Activated T-helper 2 cell treated with anti-CD3 and anti-CD28 coated beads, Interferon-gamma antibody, Interleukin-2, Interleukin-4, amounts not matched to agents 10 μg/mL and 5 μg/mL and 100 μg/mL, durations not matched to agents 14 hours and 24 hours and 36 hours (primary cell): ENCODE measurements at regions of chr1 and their contacts with region 1.

Region 1: GRCh38 chr1:219189021-219189824 is 15.5 kb downstream of the LYPLAL1 start:
- DNase-seq: no peak
- H3K4me3 Mint-ChIP-seq: no peak overlapping the region
- H3K27ac Mint-ChIP-seq: no peak overlapping the region
- H3K4me1 Mint-ChIP-seq: peaks cover 21% of the 10 kb centered on the region
- H3K27me3 Mint-ChIP-seq: no peaks in the 10 kb centered on the region

Region 2: DNA sequence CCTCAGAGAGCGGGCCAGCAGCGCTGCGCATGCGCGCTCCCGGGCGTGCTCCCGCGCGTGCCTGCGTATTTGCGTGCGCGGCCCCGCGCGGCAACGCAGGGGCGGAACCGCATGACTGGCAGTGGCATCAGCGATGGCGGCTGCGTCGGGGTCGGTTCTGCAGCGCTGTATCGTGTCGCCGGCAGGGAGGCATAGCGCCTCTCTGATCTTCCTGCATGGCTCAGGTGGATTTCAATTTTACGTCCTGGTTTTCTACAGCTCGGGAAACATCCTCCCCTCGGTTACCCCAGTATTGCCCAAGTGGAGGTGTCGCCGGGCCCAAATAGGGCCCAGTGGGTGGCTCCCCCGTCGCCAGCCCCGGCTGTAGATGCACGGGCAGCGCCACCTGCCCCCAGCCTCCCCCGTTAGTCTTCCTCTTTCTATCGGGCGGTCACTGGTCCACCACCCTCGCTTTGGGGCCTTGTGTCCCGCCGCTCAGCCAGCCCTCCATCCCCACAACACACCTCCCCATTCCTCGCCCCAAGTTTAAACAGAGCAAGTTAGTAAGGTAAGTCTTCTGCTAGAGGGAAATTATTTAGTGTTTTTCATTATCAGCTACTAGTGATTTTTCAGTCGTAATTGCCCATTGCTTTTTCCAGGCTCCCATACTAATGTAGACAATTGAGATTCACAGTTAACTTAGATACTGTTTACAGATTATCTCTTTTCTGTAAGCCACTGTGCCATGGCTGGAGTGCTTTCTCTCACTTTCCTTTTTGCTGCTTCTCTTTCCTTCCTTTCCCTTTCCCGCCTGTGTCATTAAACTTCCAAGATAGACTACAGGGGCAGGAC is 15.2 kb before region 1 on chr1 and contains the start of gene LYPLAL1:
- intact Hi-C with region 1: loop called (anchors 1 kb)
- DNase-seq: peak; percentile 86
- H3K4me3 Mint-ChIP-seq: peak within 1 kb of the TSS; percentile 99
- H3K27ac Mint-ChIP-seq: peak within 1 kb of the TSS; percentile 98
- H3K4me1 Mint-ChIP-seq: peaks cover 40% of the 10 kb centered on the region
- H3K27me3 Mint-ChIP-seq: no peaks in the 10 kb centered on the region
- total RNA-seq, gene LYPLAL1: 21.2 and 23.7 TPM in 2 replicates

Region 3: GRCh38 chr1:219257751-219258150 is 68.5 kb after region 1 on chr1:
- intact Hi-C with region 1: no loop called
- DNase-seq: no peak
- H3K4me3 Mint-ChIP-seq: no peak overlapping the region
- H3K27ac Mint-ChIP-seq: no peak overlapping the region
- H3K4me1 Mint-ChIP-seq: no peaks in the 10 kb centered on the region
- H3K27me3 Mint-ChIP-seq: no peaks in the 10 kb centered on the region